ENCODE measurements at regions of chr2 and their contacts with region 1.

Region 1: DNA sequence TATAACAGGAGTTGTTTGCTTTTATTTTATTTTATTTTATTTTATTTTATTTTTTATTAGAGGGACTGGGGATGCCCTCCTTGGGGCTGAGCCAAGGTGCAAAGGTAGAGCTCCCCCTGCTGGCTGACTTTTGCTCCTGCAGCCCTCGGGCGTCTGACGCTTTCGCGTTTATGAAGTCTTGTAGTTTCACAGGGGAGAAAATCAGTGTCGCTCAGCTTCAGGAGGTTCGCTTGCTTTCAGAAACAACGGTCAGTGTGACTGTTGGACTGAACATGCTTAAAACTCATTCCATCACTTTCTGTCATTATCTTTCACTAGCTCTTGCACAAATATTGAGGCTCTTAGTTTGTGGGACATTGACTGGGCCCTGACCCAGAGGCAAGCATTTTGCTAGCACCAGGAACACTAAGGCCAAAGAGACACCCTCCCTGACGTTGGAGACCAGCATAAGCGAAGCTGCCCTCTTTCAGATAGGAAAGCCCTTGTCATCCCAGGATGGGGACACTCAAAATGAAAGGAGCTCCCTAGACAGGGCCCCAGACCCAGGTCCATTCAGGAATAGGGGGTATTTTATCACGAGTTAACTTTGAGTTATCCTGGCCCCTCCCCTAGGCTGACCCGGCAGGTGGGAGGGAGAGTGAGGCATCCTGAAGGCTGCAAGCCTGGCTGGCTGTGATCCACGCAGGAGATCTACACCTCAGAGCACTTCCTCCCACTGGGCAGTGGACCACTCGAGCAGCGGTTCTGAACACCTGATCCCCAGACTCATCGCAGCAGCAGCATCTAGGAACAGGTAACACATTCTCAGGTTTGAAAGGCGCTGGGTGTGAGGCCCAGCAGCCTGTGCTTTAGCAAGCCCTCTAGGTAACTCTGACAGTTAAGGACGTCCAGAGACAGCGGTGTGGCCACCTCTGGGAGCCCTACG is 34.4 kb downstream of the LGALSL start:
- DNase-seq: peak; percentile 56 to 87 (median 79)
- ATAC-seq: peak; percentile 82
- H3K4me3 ChIP-seq: no peak overlapping the region
- H3K4me3 Mint-ChIP-seq: no peak overlapping the region
- H3K27ac ChIP-seq: no peak overlapping the region
- H3K27ac Mint-ChIP-seq: no peak overlapping the region
- H3K4me1 ChIP-seq: no peaks in the 10 kb centered on the region
- H3K4me1 Mint-ChIP-seq: peaks cover 11% of the 10 kb centered on the region
- H3K27me3 ChIP-seq: no peaks in the 10 kb centered on the region
- H3K27me3 Mint-ChIP-seq: peaks cover 6% of the 10 kb centered on the region
- CTCF ChIP-seq: peak; percentile 97

Region 2: GRCh38 chr2:64052468-64053241 is 435.7 kb before region 1 on chr2:
- CTCF ChIA-PET with region 1: interaction called, 55 read pairs
- POLR2A ChIA-PET with region 1: interaction called, 4 read pairs
- intact Hi-C with region 1: loop called (anchors 1 kb)
- DNase-seq: peak in 5 of 9 experiments; percentile 11 to 43 (median 24)
- ATAC-seq: peak; percentile 53
- H3K4me3 ChIP-seq: no peak overlapping the region
- H3K4me3 Mint-ChIP-seq: no peak overlapping the region
- H3K27ac ChIP-seq: no peak overlapping the region
- H3K27ac Mint-ChIP-seq: peak overlapping the region; percentile 34
- H3K4me1 ChIP-seq: peaks cover 20% of the 10 kb centered on the region
- H3K4me1 Mint-ChIP-seq: peaks cover 42% of the 10 kb centered on the region
- H3K27me3 ChIP-seq: no peaks in the 10 kb centered on the region
- H3K27me3 Mint-ChIP-seq: no peaks in the 10 kb centered on the region
- CTCF ChIP-seq: no peak

Region 3: DNA sequence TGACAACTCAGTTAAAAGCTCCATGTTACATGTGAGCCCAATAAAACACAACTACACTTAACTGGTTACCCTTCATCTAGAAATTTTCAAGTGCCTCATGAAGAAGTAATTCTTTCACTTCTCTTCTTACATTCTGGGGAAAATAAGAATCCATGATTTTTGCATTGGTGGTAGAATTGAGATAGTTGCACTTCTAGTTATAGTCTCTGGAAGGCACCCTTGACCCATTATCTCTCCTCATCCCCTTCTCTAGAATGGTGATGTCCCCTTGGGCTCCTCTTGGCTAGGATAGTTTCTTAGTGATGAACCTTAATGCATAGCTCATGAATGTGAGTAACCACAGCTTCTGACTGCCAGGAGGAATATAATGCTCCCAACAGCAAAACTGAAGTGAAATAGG is 30.8 kb before region 1 on chr2:
- CTCF ChIA-PET with region 1: interaction called, 17 read pairs
- POLR2A ChIA-PET with region 1: no interaction called
- intact Hi-C with region 1: no loop called
- DNase-seq: no peak
- ATAC-seq: no peak
- H3K4me3 ChIP-seq: no peak overlapping the region
- H3K4me3 Mint-ChIP-seq: no peak overlapping the region
- H3K27ac ChIP-seq: no peak overlapping the region
- H3K27ac Mint-ChIP-seq: no peak overlapping the region
- H3K4me1 ChIP-seq: no peaks in the 10 kb centered on the region
- H3K4me1 Mint-ChIP-seq: peaks cover 8% of the 10 kb centered on the region
- H3K27me3 ChIP-seq: peaks cover 0 to 3% of the 10 kb centered on the region in 2 experiments
- H3K27me3 Mint-ChIP-seq: peaks cover 9% of the 10 kb centered on the region
- CTCF ChIP-seq: no peak

Region 4: DNA sequence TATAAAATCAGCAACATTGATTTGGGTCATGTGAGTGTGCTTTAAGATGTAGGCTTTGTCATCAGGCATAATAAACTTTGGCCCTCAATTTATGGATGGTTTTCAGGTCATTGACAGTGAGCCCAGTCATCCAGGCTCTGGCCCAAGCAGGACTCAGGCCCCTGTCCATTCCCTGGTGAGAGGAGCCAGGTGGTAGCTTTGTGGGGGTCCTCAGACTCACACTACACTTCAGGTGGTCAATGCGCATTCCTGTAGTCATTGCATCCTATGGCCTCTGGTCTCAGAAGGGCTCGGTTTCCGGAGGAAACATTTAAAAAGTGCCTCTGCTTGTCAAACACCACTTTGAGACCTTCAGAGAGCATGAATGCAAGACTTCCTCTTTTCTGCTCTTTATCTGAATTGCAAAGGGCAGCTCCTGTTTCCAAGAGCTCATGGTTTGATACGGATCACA is 14.2 kb before region 1 on chr2:
- CTCF ChIA-PET with region 1: interaction called, 25 read pairs
- POLR2A ChIA-PET with region 1: no interaction called
- intact Hi-C with region 1: no loop called
- DNase-seq: no peak
- ATAC-seq: no peak
- H3K4me3 ChIP-seq: no peak overlapping the region
- H3K4me3 Mint-ChIP-seq: no peak overlapping the region
- H3K27ac ChIP-seq: no peak overlapping the region
- H3K27ac Mint-ChIP-seq: no peak overlapping the region
- H3K4me1 ChIP-seq: no peaks in the 10 kb centered on the region
- H3K4me1 Mint-ChIP-seq: peaks cover 13% of the 10 kb centered on the region
- H3K27me3 ChIP-seq: no peaks in the 10 kb centered on the region
- H3K27me3 Mint-ChIP-seq: no peaks in the 10 kb centered on the region
- CTCF ChIP-seq: no peak

Region 5: DNA sequence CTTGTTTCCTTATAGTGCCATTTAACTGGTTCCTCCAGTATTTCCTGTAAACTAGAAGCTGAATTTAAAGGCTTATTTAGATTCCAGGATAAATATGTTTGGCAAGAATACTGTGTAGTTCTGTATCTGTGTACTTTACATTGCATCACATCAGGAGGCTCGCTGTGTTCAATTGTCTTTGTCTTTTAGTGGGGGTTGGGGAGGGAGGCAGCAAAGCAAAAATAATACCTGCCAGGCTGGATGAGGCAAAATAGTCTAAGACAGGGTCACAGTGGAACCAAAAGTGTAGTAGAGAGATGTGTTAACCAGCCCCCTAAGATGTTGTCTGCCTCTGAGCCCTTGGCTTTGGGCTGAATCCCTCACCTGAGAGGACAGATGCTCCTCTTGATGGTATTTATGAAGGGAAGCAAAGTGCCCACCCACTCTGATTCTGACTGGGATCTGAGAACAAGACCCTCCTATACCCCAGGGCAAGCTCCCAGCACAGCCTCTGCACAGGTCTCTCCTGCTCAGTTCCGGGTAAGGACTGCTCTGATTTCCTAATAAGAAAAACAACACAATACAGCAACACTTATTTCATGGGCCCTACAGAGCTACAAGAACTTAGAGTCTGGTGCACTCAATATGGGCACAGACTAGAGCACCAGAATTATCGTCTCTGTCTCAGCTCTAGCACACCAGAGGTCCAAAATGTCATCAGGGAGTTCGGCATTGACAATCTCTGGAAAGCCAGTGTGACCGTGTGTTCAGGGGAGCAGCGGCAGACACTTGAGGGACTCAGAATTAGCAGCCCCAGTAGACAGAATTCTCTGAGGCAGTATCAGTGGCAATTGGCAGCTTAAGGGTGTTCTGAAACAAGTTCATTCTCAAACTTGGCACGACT is 28.6 kb after region 1 on chr2:
- CTCF ChIA-PET with region 1: interaction called, 10 read pairs
- POLR2A ChIA-PET with region 1: no interaction called
- intact Hi-C with region 1: no loop called
- DNase-seq: no peak
- ATAC-seq: no peak
- H3K4me3 ChIP-seq: no peak overlapping the region
- H3K4me3 Mint-ChIP-seq: no peak overlapping the region
- H3K27ac ChIP-seq: no peak overlapping the region
- H3K27ac Mint-ChIP-seq: no peak overlapping the region
- H3K4me1 ChIP-seq: no peaks in the 10 kb centered on the region
- H3K4me1 Mint-ChIP-seq: no peaks in the 10 kb centered on the region
- H3K27me3 ChIP-seq: no peaks in the 10 kb centered on the region
- H3K27me3 Mint-ChIP-seq: no peaks in the 10 kb centered on the region
- CTCF ChIP-seq: no peak

Measured in CD8-positive, alpha-beta T cell (primary cell).